ENCODE measurements at regions of chr16 and their contacts with region 1.

Region 1: DNA sequence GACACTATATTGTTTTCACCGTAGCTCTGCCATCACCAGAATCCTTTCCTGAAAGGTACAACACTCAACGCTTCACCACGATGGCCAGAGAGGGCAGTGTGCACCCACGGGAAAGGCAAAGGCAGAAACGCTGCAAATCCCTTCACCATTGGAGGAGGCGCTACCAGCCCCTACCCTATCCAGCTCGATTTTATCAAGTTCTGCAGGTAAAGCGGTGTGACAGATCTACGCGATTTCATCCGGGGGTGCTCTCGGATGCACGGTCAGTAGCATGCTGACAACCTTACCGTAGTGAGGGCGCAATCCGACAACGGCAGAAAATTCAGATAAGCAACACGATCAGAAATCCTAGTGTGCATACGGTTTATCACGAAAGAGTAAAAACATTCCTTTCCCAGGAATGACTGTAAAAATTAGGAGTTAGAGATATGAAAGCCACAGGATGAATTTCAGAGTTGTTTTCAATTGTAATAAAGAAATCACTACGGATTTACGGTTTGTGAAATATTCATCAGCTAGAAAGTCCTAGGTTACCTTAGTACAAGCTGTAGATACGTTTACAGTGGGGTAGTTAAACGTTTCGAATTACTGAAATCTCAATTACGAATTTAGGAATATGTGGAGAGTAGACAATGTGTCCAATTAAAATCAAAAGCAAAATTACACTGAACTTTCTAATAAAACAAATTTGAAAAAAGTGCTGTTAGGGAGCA is 1.8 kb downstream of the NETO2 start:
- DNase-seq: no peak
- H3K4me3 ChIP-seq: peak overlapping the region; percentile 51 to 62 (median 54)
- H3K27ac ChIP-seq: no peak overlapping the region
- H3K4me1 ChIP-seq: peaks cover 0 to 32% (median 29%) of the 10 kb centered on the region in 4 donors
- H3K27me3 ChIP-seq: peaks cover 0 to 51% (median 20%) of the 10 kb centered on the region in 4 donors
- CTCF ChIP-seq: peak; percentile 66 to 89 (median 69)
- EP300 ChIP-seq: no peak
- POLR2A ChIP-seq: no peak

Region 2: DNA sequence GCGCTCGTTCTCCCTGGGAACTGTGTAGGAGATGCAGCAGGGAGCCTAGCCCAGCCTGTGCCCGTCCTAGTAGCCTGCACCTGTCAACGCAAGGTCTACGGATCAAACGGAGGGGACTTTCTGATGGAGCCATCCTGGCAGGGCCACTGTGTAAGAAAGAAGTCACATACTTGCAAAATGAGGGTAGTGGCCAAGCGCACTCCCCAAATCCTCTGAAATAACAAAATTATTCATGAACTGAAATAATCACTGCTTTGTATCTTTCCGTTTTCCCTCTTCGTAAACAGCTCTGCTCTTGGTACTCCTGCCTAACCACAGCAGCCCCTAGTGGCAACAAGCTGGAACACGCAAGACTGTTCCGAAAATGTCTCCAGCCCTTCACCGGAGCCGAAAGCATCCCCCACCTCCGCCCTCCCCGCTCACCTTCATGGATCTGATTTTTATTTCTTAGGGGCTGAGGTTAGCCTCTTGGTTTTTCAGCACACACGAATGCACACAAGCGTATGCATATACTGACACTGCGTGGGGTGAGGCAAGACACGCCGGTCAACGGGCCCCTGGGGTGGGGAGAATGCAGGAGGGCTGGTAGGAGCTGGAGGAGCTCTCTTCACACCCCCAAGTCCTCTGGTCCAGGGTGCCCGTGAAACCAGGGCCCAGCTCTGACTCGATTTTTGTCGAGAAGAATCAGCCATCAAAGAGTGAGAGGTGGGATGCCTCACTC is 913.1 kb after region 1 on chr16:
- intact Hi-C with region 1: loop called (anchors 10 kb)
- DNase-seq: no peak
- H3K4me3 ChIP-seq: peak overlapping the region in 2 of 4 donors; percentile 6 to 37
- H3K27ac ChIP-seq: no peak overlapping the region
- H3K4me1 ChIP-seq: peaks cover 0 to 11% (median 6%) of the 10 kb centered on the region in 4 donors
- H3K27me3 ChIP-seq: peaks cover 0 to 48% (median 0%) of the 10 kb centered on the region in 4 donors
- CTCF ChIP-seq: peak; percentile 13 to 65 (median 39)
- EP300 ChIP-seq: no peak
- POLR2A ChIP-seq: no peak

Region 3: DNA sequence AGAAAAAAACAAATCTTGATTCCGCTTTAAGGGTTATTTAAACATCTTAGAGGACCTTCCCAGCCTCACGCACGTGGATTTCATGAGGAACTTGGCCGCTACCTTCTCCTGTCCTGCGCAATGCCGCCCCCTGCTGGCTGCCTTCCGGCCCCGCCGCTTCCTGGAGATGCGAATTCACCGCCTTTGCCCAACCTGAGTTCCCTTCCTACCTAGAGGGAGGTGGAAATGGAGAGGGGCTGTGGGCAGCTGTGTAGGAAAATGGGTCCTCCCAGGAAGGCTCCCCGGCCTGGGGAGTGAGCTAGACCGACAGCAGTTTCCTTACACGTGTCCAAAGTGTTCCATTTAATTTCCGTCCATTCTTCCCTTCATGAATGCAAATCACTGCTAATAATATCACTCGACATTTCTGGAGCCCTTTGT is 1014.9 kb after region 1 on chr16:
- intact Hi-C with region 1: loop called (anchors 5 kb)
- DNase-seq: peak; percentile 94
- H3K4me3 ChIP-seq: no peak overlapping the region
- H3K27ac ChIP-seq: no peak overlapping the region
- H3K4me1 ChIP-seq: peaks cover 3 to 9% (median 6%) of the 10 kb centered on the region in 4 donors
- H3K27me3 ChIP-seq: peaks cover 0 to 21% (median 0%) of the 10 kb centered on the region in 4 donors
- CTCF ChIP-seq: peak; percentile 64 to 96 (median 82)
- EP300 ChIP-seq: no peak
- POLR2A ChIP-seq: no peak